HEK293 (cell line): ENCODE measurements at regions of chr6 and their contacts with region 1.

Region 1: GRCh38 chr6:148183776-148184175 is 158.9 kb upstream of the SASH1 start:
- H3K4me3 ChIP-seq: no peak overlapping the region
- H3K27ac ChIP-seq: no peak overlapping the region
- H3K4me1 ChIP-seq: no peaks in the 10 kb centered on the region
- CTCF ChIP-seq: no peak

Region 2: DNA sequence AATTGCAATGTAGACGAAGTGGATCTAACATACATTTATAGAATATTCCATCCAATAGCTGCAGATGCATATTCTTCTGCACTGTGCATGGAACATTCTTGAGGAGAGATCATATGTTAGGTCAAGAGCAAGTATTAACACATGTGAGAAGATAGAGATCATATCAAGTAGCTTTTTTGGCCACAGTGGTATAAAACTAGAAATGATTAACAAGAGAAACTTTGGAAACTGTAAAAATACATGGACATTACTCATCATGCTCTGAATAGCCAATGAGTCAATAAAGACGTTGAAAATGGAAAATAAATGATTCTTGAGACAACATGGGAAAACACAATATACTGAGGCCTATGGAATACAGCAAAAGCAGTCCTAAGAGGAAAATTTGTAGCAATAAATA is 885.3 kb before region 1 on chr6:
- CTCF ChIA-PET with region 1: interaction called, 12 read pairs
- POLR2A ChIA-PET with region 1: no interaction called
- H3K4me3 ChIP-seq: no peak overlapping the region
- H3K27ac ChIP-seq: no peak overlapping the region
- H3K4me1 ChIP-seq: no peaks in the 10 kb centered on the region
- CTCF ChIP-seq: no peak

Region 3: GRCh38 chr6:147821295-147821897 is 362.4 kb before region 1 on chr6:
- CTCF ChIA-PET with region 1: no interaction called
- POLR2A ChIA-PET with region 1: no interaction called
- H3K4me3 ChIP-seq: no peak overlapping the region
- H3K27ac ChIP-seq: no peak overlapping the region
- H3K4me1 ChIP-seq: no peaks in the 10 kb centered on the region
- CTCF ChIP-seq: no peak

Region 4: DNA sequence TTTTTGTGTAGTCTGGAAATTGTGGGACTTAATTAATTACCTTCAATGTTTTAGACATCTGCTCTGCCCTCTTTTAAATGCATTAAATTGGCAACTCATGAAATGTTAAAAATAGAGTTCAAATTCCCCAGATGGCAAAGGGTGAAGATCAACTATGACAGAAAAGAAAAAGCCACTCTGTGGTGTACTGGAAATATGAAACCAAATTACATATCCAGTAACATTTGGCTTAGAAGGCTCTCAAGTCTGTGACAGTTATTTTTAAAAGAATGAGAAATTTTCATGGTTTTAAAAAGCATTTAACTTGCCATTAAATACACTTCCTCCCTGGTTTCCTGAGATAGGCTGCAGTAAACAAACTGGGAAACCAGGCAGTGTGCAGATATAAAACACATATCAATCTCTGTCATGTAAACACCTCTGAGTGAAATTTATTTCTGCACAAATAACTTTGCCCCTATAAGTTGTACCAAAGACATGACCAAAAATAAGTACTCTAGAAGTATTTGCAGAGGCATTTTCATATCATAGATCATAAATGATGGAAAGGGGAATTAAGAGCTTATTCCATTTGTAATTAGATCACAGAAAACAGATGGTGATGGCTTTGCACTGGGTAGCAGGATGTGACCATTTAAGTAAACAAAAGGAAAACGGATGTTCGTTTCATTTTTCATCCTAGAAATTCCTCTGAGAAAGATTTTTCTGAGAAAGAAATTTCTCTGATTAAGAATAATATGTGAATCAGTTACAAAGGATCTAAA is 315.2 kb before region 1 on chr6:
- CTCF ChIA-PET with region 1: no interaction called
- POLR2A ChIA-PET with region 1: no interaction called
- H3K4me3 ChIP-seq: no peak overlapping the region
- H3K27ac ChIP-seq: no peak overlapping the region
- H3K4me1 ChIP-seq: peaks cover 5% of the 10 kb centered on the region; the same call in 1 of the 2 replicates
- CTCF ChIP-seq: no peak

Region 5: GRCh38 chr6:147906361-147906760 is 277.4 kb before region 1 on chr6:
- CTCF ChIA-PET with region 1: no interaction called
- POLR2A ChIA-PET with region 1: no interaction called
- H3K4me3 ChIP-seq: no peak overlapping the region
- H3K27ac ChIP-seq: no peak overlapping the region
- H3K4me1 ChIP-seq: no peaks in the 10 kb centered on the region
- CTCF ChIP-seq: no peak